Motor neuron (in vitro differentiated cells): ENCODE measurements at regions of chr15 and their contacts with region 1.

Region 1: GRCh38 chr15:74768771-74769342 is 13.0 kb upstream of the CSK start:
- ATAC-seq: peak; percentile 20 to 61 (median 48)
- H3K4me3 ChIP-seq: no peak overlapping the region
- H3K27ac ChIP-seq: no peak overlapping the region
- H3K4me1 ChIP-seq: peaks cover 15 to 17% of the 10 kb centered on the region in 2 donors

Region 2: DNA sequence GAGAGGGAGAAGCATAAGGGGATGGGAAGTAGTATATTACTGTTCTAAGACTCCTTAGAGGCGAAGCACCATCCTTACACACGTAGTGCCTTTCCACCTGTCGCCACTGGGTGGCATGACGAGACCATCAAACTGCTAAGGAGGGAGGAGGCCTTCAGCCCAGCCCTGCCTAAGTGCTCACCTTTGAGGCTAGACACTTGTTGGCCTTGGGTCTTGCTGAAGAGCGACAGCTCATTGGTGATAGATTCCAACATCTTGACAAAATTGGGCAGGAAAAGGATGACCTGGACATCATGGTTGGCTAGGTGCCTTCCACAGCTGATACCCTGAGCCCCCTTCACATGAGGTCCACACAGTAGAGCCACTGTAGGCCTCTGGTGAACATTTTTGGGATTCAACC is 133.6 kb before region 1 on chr15:
- in situ Hi-C with region 1: loop called in 6 of 9 experiments (anchors 10 to 25 kb)
- ATAC-seq: peak; percentile 36 to 78 (median 58)
- H3K4me3 ChIP-seq: no peak overlapping the region
- H3K27ac ChIP-seq: no peak overlapping the region
- H3K4me1 ChIP-seq: peaks cover 0 to 6% of the 10 kb centered on the region in 2 donors

Region 3: GRCh38 chr15:74642729-74643367 is 126.0 kb before region 1 on chr15:
- in situ Hi-C with region 1: loop called in 6 of 9 experiments (anchors 10 to 25 kb)
- ATAC-seq: peak in 5 of 8 experiments; percentile 25 to 54 (median 44)
- H3K4me3 ChIP-seq: no peak overlapping the region
- H3K27ac ChIP-seq: no peak overlapping the region
- H3K4me1 ChIP-seq: peaks cover 0 to 10% of the 10 kb centered on the region in 2 donors

Region 4: DNA sequence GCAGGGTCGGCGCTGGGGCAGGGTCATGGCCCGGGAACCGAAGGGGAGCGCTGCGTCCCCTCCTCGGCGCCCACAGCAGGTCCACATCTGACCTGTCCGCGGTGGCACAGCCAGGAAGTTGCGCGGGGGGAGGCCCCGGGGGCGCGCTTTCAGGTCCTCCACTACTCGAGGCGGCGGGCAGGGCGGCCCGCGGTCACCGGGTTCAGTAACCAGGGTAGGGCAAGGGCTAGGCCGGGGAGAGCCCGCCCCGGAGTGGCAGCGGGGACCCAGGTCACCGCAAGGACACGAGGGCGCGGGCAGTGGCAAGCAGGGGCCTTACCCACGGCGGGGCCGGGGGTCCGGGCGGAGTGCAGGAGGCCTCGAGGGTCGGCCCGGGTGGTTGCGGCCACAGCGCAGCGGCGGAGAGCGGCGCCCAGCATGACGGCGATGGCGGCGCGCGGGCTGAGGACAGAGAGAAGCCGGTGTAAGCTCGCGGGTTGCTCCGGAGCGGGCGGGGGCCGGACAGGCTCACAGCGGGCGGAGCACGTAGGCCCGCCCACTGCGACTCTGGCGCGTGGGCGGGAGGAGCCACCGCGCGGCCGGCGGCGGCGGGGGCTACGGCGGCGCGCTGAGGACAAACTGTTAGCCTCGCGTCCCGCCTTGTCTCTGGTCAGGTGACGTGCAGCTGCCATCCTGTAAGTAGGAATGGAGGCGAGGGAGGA is 168.9 kb after region 1 on chr15 and contains the start of gene COX5A:
- in situ Hi-C with region 1: loop called in 3 of 9 experiments (anchors 10 to 25 kb)
- ATAC-seq: peak; percentile 96 to 98 (median 97)
- H3K4me3 ChIP-seq: peak within 1 kb of the TSS; percentile 58 to 93 (median 83)
- H3K27ac ChIP-seq: peak within 1 kb of the TSS; percentile 87 to 91
- H3K4me1 ChIP-seq: peaks cover 13 to 16% of the 10 kb centered on the region in 2 donors
- total RNA-seq, gene COX5A: 108 to 262 (median 203) TPM